Activated CD8-positive, alpha-beta memory T cell treated with anti-CD3 and anti-CD28 coated beads, Interleukin-2, amount 10 ng/mL, durations not matched to agents 7 days and 5 days (primary cell): ENCODE measurements at regions of chr3 and their contacts with region 1.

Region 1: DNA sequence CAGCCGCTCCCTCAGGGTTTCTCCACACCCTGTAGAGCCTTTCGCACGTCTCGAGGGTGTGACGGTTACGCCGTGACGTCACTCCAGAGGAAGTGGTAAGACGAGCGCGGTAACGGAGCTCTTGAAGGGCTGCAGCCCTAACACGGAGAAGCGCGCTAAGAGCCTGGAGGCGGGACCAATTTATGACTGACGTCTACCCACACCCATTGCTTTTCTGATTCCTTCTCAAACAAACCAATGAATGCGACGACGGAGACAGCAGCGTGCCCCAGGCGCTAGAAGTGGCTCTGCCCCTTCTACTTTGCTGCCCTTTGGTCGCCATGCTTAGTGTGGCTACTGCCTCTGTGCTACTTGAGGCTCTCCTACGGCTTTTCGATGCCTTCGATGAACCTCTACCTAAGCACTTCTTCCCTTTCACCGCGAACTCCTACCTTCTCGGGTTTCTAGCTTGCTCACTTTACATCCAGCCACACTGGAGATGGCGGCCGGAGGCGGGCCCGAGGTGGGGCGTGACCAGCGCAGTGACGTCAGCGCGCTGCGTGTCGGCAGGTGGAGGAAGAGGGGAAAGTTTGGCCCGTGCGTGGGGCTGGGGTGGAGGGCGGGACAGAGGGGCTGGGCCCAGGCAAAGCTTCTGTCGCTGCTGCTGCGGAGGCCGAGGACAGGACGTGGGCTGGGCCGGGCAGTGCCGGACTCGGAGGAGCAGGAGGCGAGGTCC is at the start of gene OXSR1:
- DNase-seq: peak; percentile 99
- ATAC-seq: peak; percentile 93
- H3K4me3 Mint-ChIP-seq: peak within 1 kb of the TSS; percentile 93
- H3K27ac Mint-ChIP-seq: peak within 1 kb of the TSS; percentile 100
- H3K4me1 Mint-ChIP-seq: peaks cover 53% of the 10 kb centered on the region
- H3K27me3 Mint-ChIP-seq: no peaks in the 10 kb centered on the region
- total RNA-seq, gene OXSR1: 47.8 to 56.3 TPM

Region 2: GRCh38 chr3:38117748-38118420 is 47.2 kb before region 1 on chr3:
- CTCF ChIA-PET with region 1: interaction called, 10 read pairs
- DNase-seq: peak; percentile 84
- ATAC-seq: peak; percentile 87
- H3K4me3 Mint-ChIP-seq: no peak overlapping the region
- H3K27ac Mint-ChIP-seq: no peak overlapping the region
- H3K4me1 Mint-ChIP-seq: peaks cover 4% of the 10 kb centered on the region
- H3K27me3 Mint-ChIP-seq: no peaks in the 10 kb centered on the region

Region 3: DNA sequence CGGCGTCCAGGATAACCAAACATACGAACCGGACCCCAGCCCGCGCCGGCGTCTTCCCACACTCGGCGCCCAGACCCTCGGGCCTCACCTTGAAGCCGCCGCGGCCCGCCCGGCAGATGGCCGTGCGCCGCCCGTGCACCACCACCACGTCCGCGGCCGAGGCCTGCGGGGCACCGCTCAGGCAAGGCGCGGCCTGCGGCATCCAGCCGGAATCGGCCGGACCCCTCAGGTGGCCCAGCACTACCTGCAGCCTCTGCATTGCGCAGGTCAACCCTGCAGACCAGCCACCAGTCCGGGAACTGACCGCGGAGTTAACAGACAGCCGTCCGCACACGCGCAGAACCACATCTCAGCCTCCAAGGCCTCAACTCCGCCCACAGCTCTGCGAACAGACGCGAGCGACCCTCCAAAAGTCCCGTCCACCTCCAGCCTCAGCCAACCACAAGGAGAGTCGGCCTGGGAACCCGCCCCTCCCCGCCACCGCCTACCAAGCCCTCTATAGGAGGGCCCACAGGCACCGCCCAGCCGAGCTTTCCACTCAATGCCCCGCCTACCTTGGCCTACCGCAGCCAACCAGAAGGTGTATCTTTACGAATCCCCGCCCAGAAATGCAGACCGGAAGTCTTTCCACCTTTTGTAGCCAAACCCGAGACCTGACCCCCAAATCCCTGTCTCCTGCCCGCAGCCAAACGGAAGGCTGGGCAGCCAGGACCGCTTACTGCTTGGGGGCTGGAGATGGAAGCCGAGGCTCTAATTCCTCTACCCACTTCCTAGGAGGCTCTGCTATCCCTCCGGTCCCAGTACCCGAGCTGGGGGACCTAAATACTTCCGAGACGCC is 28.1 kb before region 1 on chr3 and contains the start of gene ACAA1:
- CTCF ChIA-PET with region 1: interaction called, 16 read pairs
- DNase-seq: peak; percentile 100
- ATAC-seq: peak; percentile 88
- H3K4me3 Mint-ChIP-seq: peak within 1 kb of the TSS; percentile 84
- H3K27ac Mint-ChIP-seq: peak within 1 kb of the TSS; percentile 96
- H3K4me1 Mint-ChIP-seq: peaks cover 63% of the 10 kb centered on the region
- H3K27me3 Mint-ChIP-seq: no peaks in the 10 kb centered on the region
- total RNA-seq, gene ACAA1: 91.3 to 91.7 TPM

Region 4: GRCh38 chr3:38154033-38154494 is 11.1 kb before region 1 on chr3:
- CTCF ChIA-PET with region 1: interaction called, 41 read pairs
- DNase-seq: peak; percentile 32
- ATAC-seq: no peak
- H3K4me3 Mint-ChIP-seq: no peak overlapping the region
- H3K27ac Mint-ChIP-seq: no peak overlapping the region
- H3K4me1 Mint-ChIP-seq: peaks cover 46% of the 10 kb centered on the region
- H3K27me3 Mint-ChIP-seq: no peaks in the 10 kb centered on the region